GM12878 (cell line): ENCODE measurements at regions of chr7 and their contacts with region 1.

Region 1: DNA sequence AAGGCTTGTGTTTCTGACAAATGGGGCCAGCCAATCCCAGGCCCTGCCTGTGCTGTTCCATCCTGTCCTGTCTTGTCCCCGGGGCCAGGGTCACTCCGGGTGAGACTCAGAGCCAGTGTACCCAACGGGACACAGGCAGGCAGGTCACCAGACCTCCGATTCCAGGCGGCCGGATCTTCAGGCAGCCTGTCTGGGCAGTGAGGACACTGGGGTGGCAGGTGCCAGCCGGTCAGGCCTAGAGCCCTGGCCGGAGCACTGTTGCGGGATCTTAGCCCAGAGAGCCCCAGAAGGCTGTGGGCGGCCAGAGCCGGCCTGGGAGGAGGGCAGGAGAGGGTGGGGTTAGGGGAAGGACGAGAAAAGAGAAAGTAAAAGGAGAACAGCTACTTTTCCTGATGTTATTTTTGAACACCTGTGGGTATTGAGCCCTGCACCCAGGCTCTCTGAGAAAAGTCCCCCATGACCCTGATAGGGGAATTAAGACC is 134.3 kb upstream of the TNRC18 start:
- DNase-seq: peak; percentile 67
- ATAC-seq: peak; percentile 57
- H3K4me3 ChIP-seq: peak overlapping the region; percentile 71
- H3K27ac ChIP-seq: peak overlapping the region; percentile 98
- H3K4me1 ChIP-seq: peaks cover 39% of the 10 kb centered on the region
- H3K27me3 ChIP-seq: no peaks in the 10 kb centered on the region
- CTCF ChIP-seq: no peak
- EP300 ChIP-seq: no peak
- POLR2A ChIP-seq: peak; percentile 65
- RAD21 ChIP-seq: no peak

Region 2: GRCh38 chr7:5494683-5495561 is 63.0 kb before region 1 on chr7:
- CTCF ChIA-PET with region 1: interaction called, 13 read pairs
- POLR2A ChIA-PET with region 1: interaction called, 48 read pairs
- RAD21 ChIA-PET with region 1: interaction called, 14 read pairs
- SMC1A ChIA-PET with region 1: no interaction called
- in situ Hi-C with region 1: no loop called
- intact Hi-C with region 1: loop called (anchors 1 kb)
- DNase-seq: no peak
- ATAC-seq: peak; percentile 94
- H3K4me3 ChIP-seq: peak overlapping the region; percentile 53; the same call in 1 of the 2 replicates
- H3K27ac ChIP-seq: no peak overlapping the region
- H3K4me1 ChIP-seq: peaks cover 12% of the 10 kb centered on the region
- H3K27me3 ChIP-seq: no peaks in the 10 kb centered on the region
- CTCF ChIP-seq: peak; percentile 94 to 99 (median 96); a peak in 5 of 6 replicates
- EP300 ChIP-seq: peak in 1 of 2 experiments; percentile 24; a peak in 1 of 4 replicates
- POLR2A ChIP-seq: peak; percentile 21; the same call in 1 of the 2 replicates
- RAD21 ChIP-seq: peak; percentile 88

Region 3: GRCh38 chr7:5507013-5507412 is 50.9 kb before region 1 on chr7:
- CTCF ChIA-PET with region 1: interaction called, 13 read pairs
- POLR2A ChIA-PET with region 1: interaction called, 7 read pairs
- RAD21 ChIA-PET with region 1: interaction called, 13 read pairs
- SMC1A ChIA-PET with region 1: interaction called, 14 read pairs
- in situ Hi-C with region 1: no loop called
- intact Hi-C with region 1: no loop called
- DNase-seq: no peak
- ATAC-seq: no peak
- H3K4me3 ChIP-seq: no peak overlapping the region
- H3K27ac ChIP-seq: no peak overlapping the region
- H3K4me1 ChIP-seq: peaks cover 3% of the 10 kb centered on the region; the same call in 1 of the 2 replicates
- H3K27me3 ChIP-seq: no peaks in the 10 kb centered on the region
- CTCF ChIP-seq: no peak
- EP300 ChIP-seq: no peak
- POLR2A ChIP-seq: no peak
- RAD21 ChIP-seq: no peak

Region 4: GRCh38 chr7:5541087-5541992 is 16.6 kb before region 1 on chr7:
- CTCF ChIA-PET with region 1: interaction called, 10 read pairs
- POLR2A ChIA-PET with region 1: interaction called, 36 read pairs
- RAD21 ChIA-PET with region 1: interaction called, 15 read pairs
- SMC1A ChIA-PET with region 1: interaction called, 11 read pairs
- in situ Hi-C with region 1: no loop called
- intact Hi-C with region 1: no loop called
- DNase-seq: no peak
- ATAC-seq: peak; percentile 82
- H3K4me3 ChIP-seq: peak overlapping the region; percentile 25; the same call in 1 of the 2 replicates
- H3K27ac ChIP-seq: peak overlapping the region; percentile 88
- H3K4me1 ChIP-seq: peaks cover 36% of the 10 kb centered on the region
- H3K27me3 ChIP-seq: no peaks in the 10 kb centered on the region
- CTCF ChIP-seq: no peak
- EP300 ChIP-seq: 0 out of 4 replicates have a peak, but pooled peaks of 1 of the 2 experiments have one; percentile 32
- POLR2A ChIP-seq: peak; percentile 33; the same call in 1 of the 2 replicates
- RAD21 ChIP-seq: no peak

Region 5: DNA sequence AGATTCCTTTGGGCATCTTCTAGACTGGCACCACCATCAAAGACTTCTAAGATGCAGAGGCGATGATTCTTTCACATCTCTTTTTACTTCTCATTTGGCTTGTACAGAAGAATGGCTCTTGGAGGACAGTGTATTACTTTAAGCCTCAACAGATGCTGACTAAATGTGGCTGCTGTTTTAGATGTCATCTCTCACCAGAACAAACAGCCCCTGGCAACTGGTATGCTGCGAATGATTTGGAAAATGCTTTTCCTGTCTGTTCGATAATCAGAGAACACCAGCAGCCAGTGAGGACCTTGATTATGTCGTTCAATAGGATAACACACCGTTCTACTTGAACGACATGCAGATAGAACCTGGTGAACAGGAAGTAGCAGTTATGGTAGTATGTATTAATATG is 91.7 kb after region 1 on chr7:
- CTCF ChIA-PET with region 1: no interaction called
- POLR2A ChIA-PET with region 1: no interaction called
- RAD21 ChIA-PET with region 1: no interaction called
- SMC1A ChIA-PET with region 1: no interaction called
- in situ Hi-C with region 1: no loop called
- intact Hi-C with region 1: no loop called
- DNase-seq: no peak
- ATAC-seq: no peak
- H3K4me3 ChIP-seq: no peak overlapping the region
- H3K27ac ChIP-seq: no peak overlapping the region
- H3K4me1 ChIP-seq: no peaks in the 10 kb centered on the region
- H3K27me3 ChIP-seq: no peaks in the 10 kb centered on the region
- CTCF ChIP-seq: no peak
- EP300 ChIP-seq: no peak
- POLR2A ChIP-seq: no peak
- RAD21 ChIP-seq: no peak

Region 6: DNA sequence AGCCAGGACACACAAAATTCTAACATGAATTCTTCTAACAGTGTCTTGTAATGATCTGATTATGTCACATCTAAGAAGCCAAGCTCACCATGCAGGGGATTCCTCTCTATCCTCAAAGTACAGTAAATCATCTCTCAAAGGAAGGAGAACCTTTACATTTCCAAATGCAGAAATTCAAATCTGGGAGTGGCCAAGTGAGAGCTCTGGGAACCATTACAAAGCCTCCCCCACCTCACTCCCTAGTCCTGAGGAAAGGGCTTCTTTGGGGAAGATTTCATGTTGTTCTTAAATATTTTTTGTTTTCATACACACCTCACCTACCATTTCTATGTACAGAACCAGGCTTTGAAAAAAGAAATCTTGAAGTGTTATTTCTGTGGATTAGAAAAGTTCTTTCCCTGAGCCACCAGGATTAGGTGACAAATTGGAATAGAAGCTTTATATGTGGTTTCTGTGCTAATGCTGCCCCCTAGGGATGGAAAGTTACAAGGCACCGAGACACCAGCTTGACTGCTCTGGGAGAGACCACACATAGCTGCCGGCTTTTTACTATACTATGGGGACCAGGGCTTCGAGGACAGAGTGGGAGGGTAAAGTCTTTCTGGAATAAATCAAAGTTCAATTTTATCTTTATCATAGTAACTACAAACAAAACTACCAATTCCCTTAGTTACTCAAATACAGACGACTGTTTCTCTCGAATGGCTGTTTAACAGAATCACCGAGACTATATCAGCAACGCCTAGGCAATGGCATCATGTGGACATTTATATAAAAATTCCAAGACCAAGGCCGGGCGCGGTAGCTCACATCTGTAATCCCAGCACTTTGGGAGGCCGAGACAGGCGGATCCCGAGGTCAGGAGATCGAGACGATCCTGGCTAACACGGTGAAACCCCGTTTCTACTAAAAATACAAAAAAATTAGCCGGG is 107.4 kb after region 1 on chr7:
- CTCF ChIA-PET with region 1: interaction called, 43 read pairs
- POLR2A ChIA-PET with region 1: no interaction called
- RAD21 ChIA-PET with region 1: interaction called, 19 read pairs
- SMC1A ChIA-PET with region 1: no interaction called
- in situ Hi-C with region 1: no loop called
- intact Hi-C with region 1: no loop called
- DNase-seq: peak; percentile 53
- ATAC-seq: peak; percentile 94
- H3K4me3 ChIP-seq: no peak overlapping the region
- H3K27ac ChIP-seq: no peak overlapping the region
- H3K4me1 ChIP-seq: peaks cover 12% of the 10 kb centered on the region
- H3K27me3 ChIP-seq: no peaks in the 10 kb centered on the region
- CTCF ChIP-seq: peak; percentile 71 to 90 (median 82)
- EP300 ChIP-seq: no peak
- POLR2A ChIP-seq: no peak
- RAD21 ChIP-seq: peak; percentile 88

Region 7: GRCh38 chr7:5694912-5695726 is 137.2 kb after region 1 on chr7:
- CTCF ChIA-PET with region 1: interaction called, 24 read pairs
- POLR2A ChIA-PET with region 1: interaction called, 3 read pairs
- RAD21 ChIA-PET with region 1: interaction called, 14 read pairs
- SMC1A ChIA-PET with region 1: interaction called, 18 read pairs
- in situ Hi-C with region 1: no loop called
- intact Hi-C with region 1: no loop called
- DNase-seq: peak; percentile 94
- ATAC-seq: peak; percentile 67
- H3K4me3 ChIP-seq: peak overlapping the region; percentile 49
- H3K27ac ChIP-seq: peak overlapping the region; percentile 94
- H3K4me1 ChIP-seq: peaks cover 89% of the 10 kb centered on the region
- H3K27me3 ChIP-seq: no peaks in the 10 kb centered on the region
- CTCF ChIP-seq: no peak
- EP300 ChIP-seq: peak; percentile 79 to 86
- POLR2A ChIP-seq: peak; percentile 97
- RAD21 ChIP-seq: peak; percentile 17; the same call in 1 of the 2 replicates